AG04450 (cell line): ENCODE measurements at regions of chr4 and their contacts with region 1.

Region 1: GRCh38 chr4:43339435-43339834 is 446.9 kb downstream of the GRXCR1 start:
- DNase-seq: no peak
- H3K4me3 ChIP-seq: no peak overlapping the region
- H3K27ac ChIP-seq: peak overlapping the region; percentile 63
- H3K27me3 ChIP-seq: no peaks in the 10 kb centered on the region
- CTCF ChIP-seq: no peak

Region 2: GRCh38 chr4:43357252-43357974 is 18.0 kb after region 1 on chr4:
- CTCF ChIA-PET with region 1: interaction called, 12 read pairs
- POLR2A ChIA-PET with region 1: no interaction called
- DNase-seq: no peak
- H3K4me3 ChIP-seq: no peak overlapping the region
- H3K27ac ChIP-seq: no peak overlapping the region
- H3K27me3 ChIP-seq: no peaks in the 10 kb centered on the region
- CTCF ChIP-seq: no peak

Region 3: DNA sequence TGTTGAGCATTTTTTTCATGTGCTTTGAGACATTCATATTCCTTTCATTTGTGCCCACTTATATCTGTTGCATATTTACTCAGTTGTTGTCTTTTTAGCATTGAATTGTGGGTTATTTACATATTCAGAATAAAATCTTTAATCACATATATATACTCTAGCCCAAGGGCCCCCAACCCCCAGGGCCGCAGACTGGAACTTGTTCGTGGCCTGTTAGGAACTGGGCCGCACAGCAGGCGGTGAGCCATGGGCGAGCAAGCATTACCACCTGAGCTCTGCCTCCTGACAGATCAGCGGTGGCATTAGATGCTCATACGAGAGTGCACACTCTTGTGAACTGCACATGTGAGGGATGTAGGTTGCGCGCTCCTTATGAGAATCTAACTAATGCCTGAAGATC is 628.6 kb after region 1 on chr4:
- CTCF ChIA-PET with region 1: no interaction called
- POLR2A ChIA-PET with region 1: no interaction called
- DNase-seq: no peak
- H3K4me3 ChIP-seq: no peak overlapping the region
- H3K27ac ChIP-seq: no peak overlapping the region
- H3K27me3 ChIP-seq: no peaks in the 10 kb centered on the region
- CTCF ChIP-seq: no peak